Activated naive CD4-positive, alpha-beta T cell treated with anti-CD3 and anti-CD28 coated beads for 36 hours (primary cell): ENCODE measurements at regions of chrX and their contacts with region 1.

Region 1: DNA sequence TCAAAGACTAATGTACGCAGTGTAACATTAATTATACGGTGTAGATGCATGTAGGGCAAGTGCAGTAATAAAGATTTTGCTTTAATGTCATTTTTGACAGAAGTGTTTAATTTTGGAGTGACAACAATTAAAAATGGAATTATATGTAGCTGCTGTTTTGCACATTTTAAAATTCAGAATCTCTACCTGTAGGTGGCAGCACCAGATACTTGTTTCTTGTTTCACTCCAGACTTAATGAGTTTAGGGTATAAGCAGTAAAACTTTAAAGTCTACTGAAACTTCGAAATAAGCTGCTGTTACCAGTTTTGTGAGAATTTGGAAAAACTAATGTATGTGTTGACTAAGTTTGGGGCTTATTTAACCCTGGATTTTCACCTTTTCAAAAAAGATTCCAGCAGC is 144.9 kb downstream of the POLA1 start:
- DNase-seq: peak; percentile 8
- H3K4me3 Mint-ChIP-seq: no peak overlapping the region
- H3K27ac Mint-ChIP-seq: no peak overlapping the region
- H3K4me1 Mint-ChIP-seq: no peaks in the 10 kb centered on the region
- H3K27me3 Mint-ChIP-seq: no peaks in the 10 kb centered on the region

Region 2: DNA sequence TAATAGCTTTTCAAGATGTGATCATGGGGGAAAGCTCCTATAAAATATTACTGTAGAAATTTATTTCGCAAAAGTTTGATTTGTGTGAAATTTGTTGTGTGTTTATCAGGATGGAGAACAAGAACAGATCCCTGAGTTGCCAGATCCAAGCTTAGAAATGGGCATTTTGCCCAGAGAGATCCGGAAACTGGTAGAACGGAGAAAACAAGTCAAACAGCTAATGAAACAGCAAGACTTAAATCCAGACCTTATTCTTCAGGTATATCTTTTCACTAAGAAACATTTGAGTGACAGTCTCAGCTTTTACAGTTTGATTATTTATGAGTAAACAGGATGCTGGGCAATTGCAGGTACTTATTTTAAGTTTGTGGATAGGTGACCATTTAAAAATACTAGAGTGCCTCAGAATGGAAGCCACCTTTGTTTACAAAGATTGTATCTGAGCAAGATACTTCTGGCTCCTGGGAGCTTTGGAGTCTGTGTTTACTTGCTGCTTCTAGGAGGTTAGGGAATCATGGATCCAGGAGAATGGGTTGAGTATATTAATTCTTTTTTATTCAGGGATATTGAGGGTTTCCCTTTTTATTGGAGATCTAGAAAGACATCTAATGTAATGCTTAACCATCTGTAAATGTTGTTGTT is 90.3 kb before region 1 on chrX:
- CTCF ChIA-PET with region 1: no interaction called
- intact Hi-C with region 1: no loop called
- DNase-seq: no peak
- H3K4me3 Mint-ChIP-seq: no peak overlapping the region
- H3K27ac Mint-ChIP-seq: no peak overlapping the region
- H3K4me1 Mint-ChIP-seq: no peaks in the 10 kb centered on the region
- H3K27me3 Mint-ChIP-seq: no peaks in the 10 kb centered on the region

Region 3: DNA sequence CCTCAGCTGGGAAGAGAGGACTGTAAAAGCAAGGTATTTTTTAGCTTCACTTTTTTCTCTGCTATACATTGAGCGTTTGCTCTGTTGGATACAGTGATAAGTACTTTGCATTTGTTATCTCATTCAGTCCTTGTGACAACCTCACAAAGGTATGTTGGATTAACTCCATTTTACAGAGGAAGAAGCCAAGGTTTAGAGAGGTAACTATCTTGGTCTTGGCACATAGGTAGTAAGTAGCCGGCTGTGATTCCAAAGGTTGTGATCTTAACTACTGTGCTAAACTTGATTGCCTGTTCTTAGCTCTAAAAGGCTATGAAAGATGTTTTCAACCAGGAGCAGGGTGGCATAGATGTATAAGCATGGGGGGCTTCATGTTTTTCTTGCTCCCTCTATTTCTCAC is 10.5 kb before region 1 on chrX:
- CTCF ChIA-PET with region 1: interaction called, 12 read pairs
- intact Hi-C with region 1: no loop called
- DNase-seq: no peak
- H3K4me3 Mint-ChIP-seq: no peak overlapping the region
- H3K27ac Mint-ChIP-seq: no peak overlapping the region
- H3K4me1 Mint-ChIP-seq: no peaks in the 10 kb centered on the region
- H3K27me3 Mint-ChIP-seq: no peaks in the 10 kb centered on the region

Region 4: DNA sequence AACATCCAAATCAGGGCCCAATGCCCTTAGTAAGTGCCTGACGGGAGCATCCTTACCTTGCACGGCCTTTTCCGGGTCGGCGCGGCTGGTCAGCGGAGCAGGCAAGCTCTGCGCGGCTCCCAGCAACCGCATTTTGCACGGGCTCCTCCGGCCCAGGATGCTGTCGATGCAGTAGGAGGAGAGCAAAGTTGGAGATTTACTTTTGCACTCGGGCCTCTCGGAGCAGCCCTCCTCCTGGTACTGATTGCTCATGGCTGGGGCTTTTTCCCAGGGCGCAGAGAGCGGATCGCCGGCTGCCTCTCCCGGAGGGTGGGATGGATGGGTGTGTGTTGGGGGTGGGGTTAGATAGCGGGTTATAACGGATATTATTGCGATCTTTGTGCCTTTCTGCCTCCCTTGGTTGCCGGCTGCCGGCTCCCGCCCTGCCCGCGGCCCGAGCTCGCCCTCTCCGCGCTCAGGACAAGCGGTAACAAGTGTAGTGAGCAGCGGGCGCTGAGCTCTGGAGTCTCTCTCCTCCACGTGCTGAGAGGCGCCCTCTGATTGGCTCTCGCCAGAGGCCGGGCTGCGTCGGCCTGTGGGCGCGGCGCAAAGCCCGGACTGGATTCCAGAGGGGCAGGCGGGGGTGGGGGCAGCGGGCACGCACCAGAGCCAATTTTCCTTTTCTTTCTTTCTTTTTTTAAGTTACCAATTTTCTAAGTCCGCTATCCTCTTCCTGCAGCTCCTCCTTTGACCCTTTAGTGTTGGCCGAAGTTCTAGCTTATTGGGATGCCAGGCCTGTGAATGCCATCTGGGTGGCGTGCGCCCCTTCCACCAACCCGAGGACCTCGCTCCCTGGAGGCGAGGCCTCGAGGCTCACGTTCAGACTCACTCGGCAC is 177.1 kb after region 1 on chrX and contains the start of gene ARX:
- CTCF ChIA-PET with region 1: interaction called, 3 read pairs
- intact Hi-C with region 1: loop called (anchors 5 kb)
- DNase-seq: peak; percentile 41
- H3K4me3 Mint-ChIP-seq: no peak within 1 kb of the TSS
- H3K27ac Mint-ChIP-seq: no peak within 1 kb of the TSS
- H3K4me1 Mint-ChIP-seq: peaks cover 13% of the 10 kb centered on the region
- H3K27me3 Mint-ChIP-seq: peaks cover 53% of the 10 kb centered on the region
- total RNA-seq, gene ARX: not detected

Region 5: DNA sequence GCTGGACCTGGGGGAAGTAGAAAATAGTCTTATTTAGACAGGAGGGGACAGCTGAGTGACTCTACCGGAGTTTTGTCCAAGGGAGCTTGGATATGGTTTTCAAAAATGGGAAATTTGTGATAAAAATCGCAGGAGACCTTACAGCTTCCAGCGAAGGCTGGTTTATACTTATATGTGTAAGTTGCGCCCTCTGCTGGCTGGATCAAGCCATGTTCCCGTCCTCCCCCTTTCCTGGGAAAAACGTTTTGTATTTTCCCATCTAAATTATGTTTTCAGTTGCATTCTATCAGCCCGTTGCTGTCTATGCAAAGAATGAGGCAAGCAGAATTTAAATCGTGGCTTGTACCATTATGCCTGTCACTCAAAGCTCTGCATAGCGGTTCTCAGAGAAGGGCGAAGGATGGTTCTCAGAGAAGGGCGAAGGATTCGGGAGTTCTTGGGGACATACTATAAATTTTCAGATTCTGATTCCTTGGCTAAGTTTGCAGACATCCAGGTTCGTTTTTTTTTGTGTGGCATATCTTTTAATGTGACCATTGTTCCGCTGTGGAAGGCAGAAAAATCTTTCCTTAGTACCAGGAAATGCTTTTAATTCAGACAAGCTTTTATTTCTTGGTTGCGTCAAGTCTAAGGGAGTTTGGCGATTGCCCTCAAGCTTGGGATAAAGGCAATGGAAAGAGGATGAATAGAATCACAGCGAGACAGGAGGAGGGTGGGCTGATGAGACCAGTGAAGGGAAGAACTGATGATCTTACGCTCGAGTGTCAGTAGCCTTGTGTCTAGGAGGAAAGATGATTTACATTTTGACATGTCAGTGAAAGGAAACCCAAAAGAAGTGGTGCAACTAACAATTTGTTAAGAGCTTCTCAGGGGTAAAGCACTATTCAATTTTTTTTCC is 305.7 kb after region 1 on chrX:
- CTCF ChIA-PET with region 1: interaction called, 12 read pairs
- intact Hi-C with region 1: loop called (anchors 2 kb)
- DNase-seq: peak; percentile 51
- H3K4me3 Mint-ChIP-seq: no peak overlapping the region
- H3K27ac Mint-ChIP-seq: no peak overlapping the region
- H3K4me1 Mint-ChIP-seq: no peaks in the 10 kb centered on the region
- H3K27me3 Mint-ChIP-seq: peaks cover 2% of the 10 kb centered on the region